ENCODE measurements at regions of chr5 and their contacts with region 1.

Region 1: GRCh38 chr5:141618804-141619554 is at the start of gene DIAPH1:
- DNase-seq: peak; percentile 98
- H3K4me3 Mint-ChIP-seq: peak within 1 kb of the TSS; percentile 100
- H3K27ac Mint-ChIP-seq: peak within 1 kb of the TSS; percentile 99
- H3K4me1 Mint-ChIP-seq: peaks cover 57% of the 10 kb centered on the region
- H3K27me3 Mint-ChIP-seq: no peaks in the 10 kb centered on the region
- total RNA-seq, gene DIAPH1: 225 and 232 TPM in 2 replicates

Region 2: GRCh38 chr5:141534492-141535211 is 84.3 kb before region 1 on chr5:
- intact Hi-C with region 1: no loop called
- DNase-seq: no peak
- H3K4me3 Mint-ChIP-seq: no peak overlapping the region
- H3K27ac Mint-ChIP-seq: no peak overlapping the region
- H3K4me1 Mint-ChIP-seq: peaks cover 1% of the 10 kb centered on the region
- H3K27me3 Mint-ChIP-seq: no peaks in the 10 kb centered on the region

Region 3: GRCh38 chr5:141564216-141564692 is 54.7 kb before region 1 on chr5:
- intact Hi-C with region 1: loop called (anchors 1 kb)
- DNase-seq: peak; percentile 92
- H3K4me3 Mint-ChIP-seq: no peak overlapping the region
- H3K27ac Mint-ChIP-seq: peak overlapping the region; percentile 86
- H3K4me1 Mint-ChIP-seq: peaks cover 32% of the 10 kb centered on the region
- H3K27me3 Mint-ChIP-seq: no peaks in the 10 kb centered on the region

Region 4: GRCh38 chr5:141597394-141597793 is 21.6 kb before region 1 on chr5:
- intact Hi-C with region 1: loop called (anchors 1 kb)
- DNase-seq: no peak
- H3K4me3 Mint-ChIP-seq: peak overlapping the region; percentile 32
- H3K27ac Mint-ChIP-seq: peak overlapping the region; percentile 47
- H3K4me1 Mint-ChIP-seq: peaks cover 56% of the 10 kb centered on the region
- H3K27me3 Mint-ChIP-seq: no peaks in the 10 kb centered on the region

Region 5: DNA sequence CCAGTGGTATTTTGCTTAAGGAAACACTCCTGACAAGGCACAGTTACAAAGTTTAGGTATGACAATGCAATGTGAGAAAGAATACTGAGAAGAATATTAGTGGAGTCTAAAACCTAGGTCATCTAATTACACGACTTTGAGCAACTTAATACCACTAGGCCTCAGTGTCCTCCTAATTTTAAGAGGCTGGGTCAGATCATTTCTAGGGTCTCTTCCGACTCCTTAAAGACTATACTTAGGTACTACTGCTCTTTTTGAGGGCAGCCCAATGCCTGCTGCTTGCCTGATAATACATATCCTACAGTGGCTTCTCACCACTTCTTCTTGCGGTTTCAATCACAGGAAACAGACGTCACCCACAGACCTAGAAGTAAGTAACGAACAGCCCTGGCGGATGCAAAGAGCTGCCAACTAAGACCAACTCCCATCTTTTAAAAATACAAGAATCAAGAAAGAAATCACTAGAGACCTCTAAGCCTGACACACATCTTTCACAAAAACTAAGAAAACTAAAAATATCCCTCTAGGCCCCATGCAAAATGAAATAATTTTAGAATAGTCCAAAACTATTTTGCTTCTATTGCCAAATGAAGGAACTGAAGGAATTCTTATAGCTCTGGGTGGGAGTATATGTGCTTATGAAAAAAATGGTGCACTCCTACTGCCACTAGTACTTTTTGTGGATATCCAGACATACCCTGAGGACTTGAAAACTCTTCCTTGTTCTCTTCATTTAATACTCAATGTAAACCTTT is 13.3 kb before region 1 on chr5:
- intact Hi-C with region 1: loop called (anchors 1 kb)
- DNase-seq: peak; percentile 93
- H3K4me3 Mint-ChIP-seq: peak overlapping the region; percentile 84
- H3K27ac Mint-ChIP-seq: peak overlapping the region; percentile 97
- H3K4me1 Mint-ChIP-seq: peaks cover 68% of the 10 kb centered on the region
- H3K27me3 Mint-ChIP-seq: no peaks in the 10 kb centered on the region

Region 6: GRCh38 chr5:141636413-141637122 is 17.6 kb after region 1 on chr5 and contains the starts of genes HDAC3 and RELL2:
- intact Hi-C with region 1: loop called (anchors 1 kb)
- DNase-seq: peak; percentile 99
- H3K4me3 Mint-ChIP-seq: peak within 1 kb of the TSS; percentile 96
- H3K27ac Mint-ChIP-seq: peak within 1 kb of the TSS; percentile 92
- H3K4me1 Mint-ChIP-seq: peaks cover 43% of the 10 kb centered on the region
- H3K27me3 Mint-ChIP-seq: no peaks in the 10 kb centered on the region
- total RNA-seq, gene HDAC3: 88.1 and 92.3 TPM in 2 replicates
- total RNA-seq, gene RELL2: 24.1 TPM in 2 replicates

Region 7: GRCh38 chr5:141650851-141651727 is 32.1 kb after region 1 on chr5 and contains the start of gene FCHSD1:
- intact Hi-C with region 1: loop called (anchors 1 kb)
- DNase-seq: peak; percentile 94
- H3K4me3 Mint-ChIP-seq: peak within 1 kb of the TSS; percentile 92
- H3K27ac Mint-ChIP-seq: peak within 1 kb of the TSS; percentile 93
- H3K4me1 Mint-ChIP-seq: peaks cover 28% of the 10 kb centered on the region
- H3K27me3 Mint-ChIP-seq: no peaks in the 10 kb centered on the region
- total RNA-seq, gene FCHSD1: 33.1 and 34.5 TPM in 2 replicates

Region 8: GRCh38 chr5:141701360-141702119 is 82.6 kb after region 1 on chr5:
- intact Hi-C with region 1: no loop called
- DNase-seq: no peak
- H3K4me3 Mint-ChIP-seq: peak overlapping the region; percentile 82
- H3K27ac Mint-ChIP-seq: no peak overlapping the region
- H3K4me1 Mint-ChIP-seq: peaks cover 18% of the 10 kb centered on the region
- H3K27me3 Mint-ChIP-seq: peaks cover 47% of the 10 kb centered on the region

Region 9: DNA sequence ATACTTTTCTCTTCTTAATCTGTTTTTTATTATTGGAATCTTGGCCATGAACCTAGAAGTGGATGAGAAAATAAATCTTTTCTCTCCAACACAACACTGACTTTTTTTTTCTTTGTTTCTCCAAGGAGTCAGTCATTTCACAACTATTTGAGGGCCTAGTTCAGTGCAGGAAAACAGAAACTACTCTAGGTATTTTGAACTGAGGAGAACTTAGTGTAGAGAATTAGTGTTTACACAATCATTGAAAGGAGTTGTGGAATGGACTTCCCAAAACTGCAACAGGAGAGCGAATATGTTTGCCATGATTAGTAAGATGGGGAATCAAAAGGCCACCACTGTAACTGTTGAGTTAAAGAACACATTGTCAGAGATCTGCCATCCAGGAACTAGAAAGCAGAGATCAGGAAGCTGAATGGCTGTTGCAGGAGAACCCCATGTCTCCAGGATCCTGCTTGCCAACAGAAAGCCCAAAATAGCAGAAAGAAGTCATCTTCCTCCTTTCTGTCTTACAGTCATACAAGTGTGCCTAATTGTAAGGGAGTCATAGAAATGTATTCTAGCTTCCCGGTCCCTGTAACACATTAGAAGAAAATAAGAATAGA is 279.6 kb after region 1 on chr5:
- intact Hi-C with region 1: no loop called
- DNase-seq: no peak
- H3K4me3 Mint-ChIP-seq: no peak overlapping the region
- H3K27ac Mint-ChIP-seq: no peak overlapping the region
- H3K4me1 Mint-ChIP-seq: no peaks in the 10 kb centered on the region
- H3K27me3 Mint-ChIP-seq: peaks cover 34% of the 10 kb centered on the region

Region 10: DNA sequence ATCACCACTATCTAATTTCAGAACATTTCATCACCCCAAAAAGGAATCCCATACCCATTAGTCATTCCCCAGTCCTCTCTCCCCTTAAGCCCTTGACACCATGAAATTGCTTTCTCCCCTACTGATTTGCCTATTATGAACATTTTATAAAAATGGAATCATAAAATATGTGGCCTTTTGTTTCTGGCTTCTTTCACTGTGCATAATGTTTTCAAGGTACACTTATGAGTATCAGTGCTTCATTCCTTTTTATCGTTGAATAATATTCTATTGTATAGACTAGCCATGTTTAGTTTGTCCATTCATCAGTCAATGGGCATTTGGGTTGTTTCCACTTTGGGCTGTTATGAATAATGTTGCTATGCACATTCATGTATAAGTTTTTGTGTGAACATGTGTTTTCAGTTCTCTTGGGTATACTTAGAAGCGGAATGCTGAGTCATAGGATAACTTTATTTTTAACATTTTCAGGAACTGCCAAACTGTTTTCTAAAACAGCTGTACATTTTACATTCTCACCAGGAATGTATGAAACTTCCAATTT is 1107.3 kb after region 1 on chr5:
- intact Hi-C with region 1: no loop called
- DNase-seq: no peak
- H3K4me3 Mint-ChIP-seq: no peak overlapping the region
- H3K27ac Mint-ChIP-seq: no peak overlapping the region
- H3K4me1 Mint-ChIP-seq: no peaks in the 10 kb centered on the region
- H3K27me3 Mint-ChIP-seq: peaks cover 6% of the 10 kb centered on the region

Measured in activated CD4-positive, alpha-beta T cell treated with anti-CD3 and anti-CD28 coated beads, Interleukin-2, amount 10 ng/mL, durations not matched to agents 24 days and 14 days (primary cell).